Activated naive CD4-positive, alpha-beta T cell treated with anti-CD3 and anti-CD28 coated beads for 36 hours (primary cell): ENCODE measurements at regions of chr14 and their contacts with region 1.

Region 1: DNA sequence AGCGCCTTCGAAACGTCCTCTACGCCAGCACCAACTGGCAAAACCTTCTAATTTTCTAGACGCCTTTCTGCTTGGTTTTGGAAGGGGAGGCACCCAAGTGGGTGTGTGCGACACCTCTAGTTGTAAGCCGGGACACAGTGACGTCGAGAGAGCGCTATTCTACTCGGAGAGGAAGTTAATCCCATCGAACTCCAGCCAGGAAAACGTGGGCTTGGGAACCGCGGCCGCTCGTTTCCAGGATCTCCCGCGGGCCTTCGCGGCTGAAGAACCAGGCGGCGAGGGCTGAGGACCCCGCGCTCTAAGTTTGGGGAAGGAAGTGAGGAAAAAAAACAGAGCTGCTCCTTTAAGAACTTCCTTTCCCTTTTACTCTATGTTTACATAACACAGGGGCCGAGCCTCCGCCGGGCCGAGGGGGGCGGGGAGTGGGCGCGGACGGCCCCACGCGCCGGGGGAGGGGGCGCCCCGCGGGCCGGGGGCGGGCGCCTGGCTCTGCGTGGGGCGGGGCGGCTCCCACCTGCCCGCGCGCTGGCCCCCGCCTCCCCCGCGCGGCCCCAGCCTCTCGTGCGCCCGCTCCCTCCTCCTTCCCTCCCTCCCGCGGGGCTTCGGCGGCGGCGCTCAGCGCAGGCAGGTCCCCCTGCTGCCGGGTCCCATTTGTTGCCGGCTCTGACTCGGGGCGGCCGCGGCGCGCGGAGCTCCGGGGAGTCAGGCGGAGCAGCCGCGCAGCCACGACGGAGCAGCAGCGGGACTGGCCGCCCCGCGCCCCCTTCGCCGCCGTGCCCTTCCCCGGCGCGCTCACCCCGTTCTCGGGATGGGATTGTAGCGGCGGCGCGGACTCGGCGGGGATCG is at the start of gene PELI2:
- DNase-seq: peak; percentile 70
- H3K4me3 Mint-ChIP-seq: peak within 1 kb of the TSS; percentile 86
- H3K27ac Mint-ChIP-seq: peak within 1 kb of the TSS; percentile 76
- H3K4me1 Mint-ChIP-seq: peaks cover 40% of the 10 kb centered on the region
- H3K27me3 Mint-ChIP-seq: peaks cover 17% of the 10 kb centered on the region
- total RNA-seq, gene PELI2: 6.2 to 7.8 TPM

Region 2: GRCh38 chr14:55333711-55334485 is 784.1 kb before region 1 on chr14:
- CTCF ChIA-PET with region 1: no interaction called
- intact Hi-C with region 1: loop called (anchors 5 kb)
- DNase-seq: peak; percentile 21
- H3K4me3 Mint-ChIP-seq: peak overlapping the region; percentile 10
- H3K27ac Mint-ChIP-seq: peak overlapping the region; percentile 78
- H3K4me1 Mint-ChIP-seq: peaks cover 82% of the 10 kb centered on the region
- H3K27me3 Mint-ChIP-seq: no peaks in the 10 kb centered on the region

Region 3: DNA sequence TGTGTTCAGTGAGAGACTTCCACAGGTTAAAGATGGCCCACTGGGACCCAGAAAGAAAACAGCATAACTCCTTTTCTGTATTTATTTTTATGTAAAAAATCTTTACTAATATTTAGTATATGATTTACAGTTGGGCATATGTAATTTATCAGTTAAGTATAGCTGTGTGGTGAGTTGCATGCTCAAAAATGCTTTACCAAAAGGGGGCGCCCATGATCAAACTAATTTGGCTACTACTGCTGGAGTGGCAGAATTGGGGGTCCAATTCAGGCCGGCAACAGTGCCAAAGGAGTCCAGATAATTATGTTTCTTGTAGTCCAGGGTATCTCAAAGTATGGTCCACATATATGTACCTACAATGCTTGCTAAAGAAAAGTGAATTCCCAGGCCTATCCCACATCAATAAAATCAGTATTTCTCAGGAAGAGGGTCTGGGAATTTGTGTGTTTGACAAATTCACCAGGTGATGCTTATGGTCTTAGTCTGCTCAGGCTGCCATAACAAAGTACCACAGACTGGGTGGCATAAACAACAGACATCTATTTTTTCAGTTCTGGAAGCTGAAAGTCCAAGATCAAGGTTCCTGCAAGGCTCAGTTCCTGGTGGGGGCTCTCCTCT is 386.0 kb before region 1 on chr14:
- CTCF ChIA-PET with region 1: no interaction called
- intact Hi-C with region 1: loop called (anchors 10 kb)
- DNase-seq: peak; percentile 77
- H3K4me3 Mint-ChIP-seq: no peak overlapping the region
- H3K27ac Mint-ChIP-seq: no peak overlapping the region
- H3K4me1 Mint-ChIP-seq: no peaks in the 10 kb centered on the region
- H3K27me3 Mint-ChIP-seq: no peaks in the 10 kb centered on the region

Region 4: DNA sequence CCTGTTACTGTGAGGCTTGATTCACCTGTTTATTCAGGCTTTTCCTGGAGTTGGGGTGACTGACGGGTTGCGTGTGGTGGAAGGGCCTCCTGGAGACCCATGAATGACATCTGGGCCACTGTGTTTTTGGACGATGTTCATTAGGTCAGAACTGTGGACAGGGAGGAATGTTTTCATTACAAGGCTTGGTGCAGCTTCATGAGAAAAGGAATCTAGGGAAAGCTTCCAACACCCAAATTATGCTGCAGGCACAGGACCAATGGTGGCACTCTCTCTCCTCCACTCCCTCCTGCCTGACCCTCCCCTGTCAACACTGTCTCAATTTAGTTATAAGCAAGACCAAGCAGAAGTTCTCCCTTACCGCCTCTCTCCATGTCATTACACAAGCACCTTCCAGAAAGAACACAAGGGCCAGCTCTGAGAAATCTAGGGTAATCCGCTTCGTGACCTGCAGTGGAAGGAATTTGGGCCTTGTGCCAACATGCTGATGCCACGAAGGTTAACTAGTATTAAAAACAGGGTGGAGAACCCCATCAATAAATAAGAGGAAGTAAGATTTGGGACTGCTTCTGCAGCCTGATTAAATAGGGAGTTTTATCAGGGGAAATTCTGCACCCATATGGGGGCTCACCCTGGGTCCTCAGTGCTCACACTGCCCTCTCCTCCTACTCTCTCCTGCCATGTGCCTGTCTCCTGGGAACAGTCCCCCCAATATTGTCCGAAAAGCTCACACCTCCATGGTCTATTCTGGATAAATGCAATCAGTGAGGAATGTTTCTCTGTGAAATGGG is 337.6 kb before region 1 on chr14:
- CTCF ChIA-PET with region 1: no interaction called
- intact Hi-C with region 1: no loop called
- DNase-seq: no peak
- H3K4me3 Mint-ChIP-seq: no peak overlapping the region
- H3K27ac Mint-ChIP-seq: no peak overlapping the region
- H3K4me1 Mint-ChIP-seq: no peaks in the 10 kb centered on the region
- H3K27me3 Mint-ChIP-seq: no peaks in the 10 kb centered on the region

Region 5: DNA sequence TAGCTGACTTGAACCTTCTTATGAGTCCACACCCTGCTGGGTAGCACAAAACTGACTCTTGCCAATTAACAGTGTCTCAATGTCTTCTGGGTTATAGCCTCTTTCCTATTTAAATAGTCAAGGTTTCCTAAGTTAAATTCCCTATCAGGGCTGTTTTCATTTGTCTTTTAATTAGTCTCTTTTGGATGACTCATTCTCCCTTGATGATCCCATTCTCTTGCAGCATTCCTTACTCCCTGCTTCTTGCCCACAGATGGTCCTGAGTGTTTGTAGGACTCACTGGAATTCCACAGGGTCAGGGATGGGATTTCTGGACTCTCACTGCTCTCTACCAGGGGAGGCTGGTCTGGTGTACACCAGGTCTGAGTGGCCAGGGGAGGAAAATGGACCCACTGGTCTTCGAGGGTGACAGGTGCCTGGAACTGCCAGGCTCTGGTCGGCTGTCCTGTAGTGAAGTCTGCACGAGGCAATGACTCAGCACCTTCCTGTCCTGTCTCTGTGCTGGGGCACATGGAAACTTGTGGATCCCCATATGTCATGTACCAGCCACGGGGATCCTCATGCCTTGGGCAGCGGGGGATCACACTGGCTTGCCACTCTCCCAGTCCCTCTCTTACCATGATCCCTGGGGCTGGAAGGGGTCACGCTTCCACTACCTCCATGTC is 236.3 kb before region 1 on chr14:
- CTCF ChIA-PET with region 1: no interaction called
- intact Hi-C with region 1: no loop called
- DNase-seq: no peak
- H3K4me3 Mint-ChIP-seq: no peak overlapping the region
- H3K27ac Mint-ChIP-seq: no peak overlapping the region
- H3K4me1 Mint-ChIP-seq: no peaks in the 10 kb centered on the region
- H3K27me3 Mint-ChIP-seq: peaks cover 6% of the 10 kb centered on the region

Region 6: GRCh38 chr14:55980970-55981369 is 137.0 kb before region 1 on chr14:
- CTCF ChIA-PET with region 1: no interaction called
- intact Hi-C with region 1: loop called (anchors 5 kb)
- DNase-seq: no peak
- H3K4me3 Mint-ChIP-seq: no peak overlapping the region
- H3K27ac Mint-ChIP-seq: no peak overlapping the region
- H3K4me1 Mint-ChIP-seq: peaks cover 9% of the 10 kb centered on the region
- H3K27me3 Mint-ChIP-seq: peaks cover 21% of the 10 kb centered on the region

Region 7: DNA sequence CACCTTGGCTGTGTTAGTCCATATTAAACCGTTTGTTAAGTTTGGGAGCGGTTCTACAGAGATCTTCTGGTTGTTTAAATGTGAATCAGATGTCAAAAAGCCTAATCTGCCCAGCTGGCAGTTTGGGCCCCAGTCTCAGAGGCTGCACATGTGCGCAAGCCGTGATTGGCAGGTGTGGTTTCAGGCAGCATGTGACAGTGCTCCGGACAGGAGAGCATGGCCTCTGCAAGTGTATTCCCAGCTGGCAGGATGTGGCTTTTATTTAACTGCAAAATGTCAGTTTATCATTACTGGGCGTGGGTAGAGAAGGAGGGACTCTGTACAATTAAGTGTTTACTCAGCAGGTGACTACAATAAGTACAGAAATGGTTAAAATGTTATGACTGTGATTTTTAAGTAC is 77.7 kb after region 1 on chr14:
- CTCF ChIA-PET with region 1: no interaction called
- intact Hi-C with region 1: loop called (anchors 2 kb)
- DNase-seq: peak; percentile 72
- H3K4me3 Mint-ChIP-seq: peak overlapping the region; percentile 54
- H3K27ac Mint-ChIP-seq: peak overlapping the region; percentile 76
- H3K4me1 Mint-ChIP-seq: peaks cover 25% of the 10 kb centered on the region
- H3K27me3 Mint-ChIP-seq: no peaks in the 10 kb centered on the region

Region 8: GRCh38 chr14:56501909-56502530 is 384.0 kb after region 1 on chr14:
- CTCF ChIA-PET with region 1: no interaction called
- intact Hi-C with region 1: no loop called
- DNase-seq: no peak
- H3K4me3 Mint-ChIP-seq: no peak overlapping the region
- H3K27ac Mint-ChIP-seq: no peak overlapping the region
- H3K4me1 Mint-ChIP-seq: peaks cover 3% of the 10 kb centered on the region
- H3K27me3 Mint-ChIP-seq: peaks cover 5% of the 10 kb centered on the region

Region 9: DNA sequence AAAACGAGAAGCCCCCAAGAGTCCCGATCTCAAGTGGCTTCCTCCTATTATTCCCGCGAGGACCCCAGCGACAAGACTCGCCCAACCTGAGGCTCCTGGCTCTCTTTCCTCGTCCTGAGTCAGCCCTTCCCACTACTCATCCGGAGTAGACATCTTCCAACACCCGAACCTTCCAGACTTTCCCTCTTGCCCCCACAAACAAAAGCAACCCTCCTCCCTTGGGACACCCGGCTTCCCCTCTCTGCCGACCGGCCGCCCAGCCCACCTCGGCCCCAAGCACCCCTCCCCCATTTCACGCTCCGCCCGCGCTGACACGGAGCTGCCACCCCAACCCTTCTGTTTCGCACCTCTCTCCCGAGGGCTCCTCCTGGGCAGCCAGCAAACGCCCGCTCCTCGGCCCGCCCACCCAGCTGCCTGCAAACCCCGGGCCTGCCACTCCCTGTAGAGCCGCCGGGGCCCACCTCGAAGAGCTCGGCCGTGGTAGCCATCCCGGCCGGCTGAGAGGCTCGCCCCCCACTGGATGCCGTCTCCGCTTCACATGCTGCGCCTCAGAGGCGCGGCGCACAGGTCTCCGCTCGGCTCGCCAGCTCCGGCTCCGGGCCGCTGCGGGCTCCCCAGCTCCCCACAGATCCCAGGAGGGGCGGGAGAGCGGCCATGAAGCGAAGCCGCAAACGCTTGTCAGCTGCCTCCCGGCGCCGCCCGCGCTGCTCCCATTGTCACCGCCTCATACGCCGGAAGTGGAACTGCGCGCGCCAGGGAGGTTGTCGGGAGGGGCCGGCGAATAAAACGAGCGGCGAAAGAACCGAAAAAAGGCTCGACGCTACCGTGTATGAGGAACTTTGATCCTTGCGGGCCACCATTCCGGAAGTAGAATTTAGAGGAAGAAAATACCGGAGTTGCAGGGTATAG is 1150.4 kb after region 1 on chr14 and contains the starts of genes AP5M1 and EXOC5:
- CTCF ChIA-PET with region 1: no interaction called
- intact Hi-C with region 1: loop called (anchors 5 kb)
- DNase-seq: peak; percentile 95
- H3K4me3 Mint-ChIP-seq: peak within 1 kb of the TSS; percentile 99
- H3K27ac Mint-ChIP-seq: peak within 1 kb of the TSS; percentile 99
- H3K4me1 Mint-ChIP-seq: peaks cover 57% of the 10 kb centered on the region
- H3K27me3 Mint-ChIP-seq: no peaks in the 10 kb centered on the region
- total RNA-seq, gene AP5M1: 22.8 to 23.3 TPM
- total RNA-seq, gene EXOC5: 65.0 to 68.1 TPM